Head of caudate nucleus (tissue), 42 donors: ENCODE measurements at regions of chr3 and their contacts with region 1.

Region 1: GRCh38 chr3:12663936-12664908 is at the start of gene RAF1:
- DNase-seq: peak; percentile 96 to 100 (median 98)

Region 2: DNA sequence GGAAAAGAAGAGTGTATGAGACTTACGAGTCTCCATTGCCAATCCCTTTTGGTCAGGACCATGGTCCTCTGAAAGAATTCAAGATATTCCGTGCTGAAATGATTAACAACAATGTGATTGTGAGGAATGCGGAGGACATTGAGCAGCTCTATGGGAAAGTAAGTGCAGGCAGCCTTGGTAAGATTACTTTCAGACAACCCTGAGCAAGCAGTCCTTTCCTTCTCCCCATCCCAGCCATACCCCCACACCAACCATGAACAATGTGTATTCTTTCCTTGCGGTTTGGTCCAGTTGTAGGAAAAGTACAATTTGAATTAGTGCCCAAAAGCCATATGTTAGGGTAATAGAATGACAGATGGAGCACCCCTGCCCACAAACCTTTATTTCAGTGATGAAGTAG is 174.4 kb before region 1 on chr3:
- intact Hi-C with region 1: loop called (anchors 5 kb)
- DNase-seq: no peak

Region 3: DNA sequence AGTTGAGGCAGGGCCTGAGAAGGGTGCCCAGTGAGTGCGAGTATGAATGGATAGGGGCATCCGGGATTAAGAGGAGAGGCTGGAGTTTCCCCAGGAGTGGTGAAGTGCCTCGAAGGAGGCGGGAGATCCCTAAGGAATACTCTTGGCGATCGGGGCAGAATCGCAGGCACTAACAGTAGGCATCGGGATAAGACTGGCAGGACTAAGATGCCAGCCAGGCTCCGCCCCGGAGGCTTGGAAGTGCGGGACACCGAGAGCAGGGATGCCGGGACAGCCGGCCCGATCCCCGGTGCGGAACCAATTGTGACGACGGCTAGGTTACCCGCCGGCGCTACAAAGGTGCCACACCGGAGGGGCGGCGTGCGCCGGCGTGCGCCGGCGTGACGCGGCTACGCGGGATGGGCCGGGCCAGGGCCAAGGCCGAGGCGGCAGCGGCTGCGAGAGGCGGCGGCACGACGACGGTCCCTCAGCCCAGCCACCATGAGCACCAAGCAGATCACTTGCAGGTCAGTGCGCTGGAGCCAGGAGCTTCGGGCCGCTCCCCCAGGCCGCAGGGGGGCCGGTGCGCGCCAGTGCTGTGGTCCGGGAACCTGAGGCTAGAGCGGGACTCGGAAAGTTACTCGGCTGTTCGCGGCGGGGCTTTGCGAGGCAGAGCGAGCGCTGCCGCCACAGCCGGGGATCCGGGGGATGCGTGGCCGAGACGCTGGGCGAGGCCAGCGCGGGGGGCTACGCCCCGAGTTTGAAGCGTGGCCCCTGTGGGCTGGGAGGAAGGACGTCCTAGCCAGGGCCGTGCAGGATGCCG is 107.3 kb before region 1 on chr3 and contains the start of gene MKRN2:
- intact Hi-C with region 1: loop called (anchors 2 kb)
- DNase-seq: peak; percentile 77 to 96 (median 88)

Region 4: GRCh38 chr3:12568747-12569146 is 95.5 kb before region 1 on chr3:
- intact Hi-C with region 1: no loop called
- DNase-seq: no peak

Region 5: DNA sequence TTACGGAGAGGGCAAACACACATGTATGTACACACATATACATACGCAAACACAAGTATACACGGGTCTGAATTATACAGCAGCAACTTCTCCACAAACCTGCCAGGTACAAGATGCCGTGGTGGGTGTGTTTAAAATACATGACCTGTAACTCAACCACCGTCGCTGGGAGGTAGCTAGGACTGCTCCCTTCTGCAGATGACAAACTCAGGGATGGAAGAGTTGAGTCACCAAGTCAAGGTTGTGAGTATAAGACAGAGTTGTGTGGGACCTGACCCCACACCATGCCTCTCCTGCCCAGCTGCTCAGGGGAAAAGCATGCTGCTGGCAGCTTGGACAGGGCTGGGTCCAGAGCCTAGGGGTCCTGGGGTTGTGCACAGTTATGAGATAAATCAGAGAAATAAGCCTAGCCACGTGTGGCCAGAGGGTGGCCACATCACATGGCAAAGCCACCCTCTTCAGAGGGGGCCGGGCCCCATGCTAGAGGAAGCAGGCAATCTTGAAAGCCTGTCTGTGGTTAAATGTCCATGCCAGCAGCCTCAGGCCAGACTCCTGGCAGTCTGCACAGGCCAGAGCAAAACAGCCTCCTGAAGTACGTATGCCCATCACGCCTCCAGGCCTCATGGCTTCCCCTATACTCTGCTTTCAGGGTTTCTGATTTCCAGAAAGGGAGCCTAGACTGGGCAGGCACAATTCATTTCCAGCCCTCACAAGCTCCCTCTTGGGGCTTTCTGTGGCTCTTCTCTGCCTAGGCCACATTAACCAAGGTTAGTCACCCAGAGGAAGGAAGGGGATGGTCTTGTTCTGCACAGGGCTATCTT is 284.9 kb after region 1 on chr3:
- intact Hi-C with region 1: loop called (anchors 10 kb)
- DNase-seq: peak in 21 of 42 donors; percentile 28 to 65 (median 46)